ENCODE measurements at regions of chr6 and their contacts with region 1.

Region 1: DNA sequence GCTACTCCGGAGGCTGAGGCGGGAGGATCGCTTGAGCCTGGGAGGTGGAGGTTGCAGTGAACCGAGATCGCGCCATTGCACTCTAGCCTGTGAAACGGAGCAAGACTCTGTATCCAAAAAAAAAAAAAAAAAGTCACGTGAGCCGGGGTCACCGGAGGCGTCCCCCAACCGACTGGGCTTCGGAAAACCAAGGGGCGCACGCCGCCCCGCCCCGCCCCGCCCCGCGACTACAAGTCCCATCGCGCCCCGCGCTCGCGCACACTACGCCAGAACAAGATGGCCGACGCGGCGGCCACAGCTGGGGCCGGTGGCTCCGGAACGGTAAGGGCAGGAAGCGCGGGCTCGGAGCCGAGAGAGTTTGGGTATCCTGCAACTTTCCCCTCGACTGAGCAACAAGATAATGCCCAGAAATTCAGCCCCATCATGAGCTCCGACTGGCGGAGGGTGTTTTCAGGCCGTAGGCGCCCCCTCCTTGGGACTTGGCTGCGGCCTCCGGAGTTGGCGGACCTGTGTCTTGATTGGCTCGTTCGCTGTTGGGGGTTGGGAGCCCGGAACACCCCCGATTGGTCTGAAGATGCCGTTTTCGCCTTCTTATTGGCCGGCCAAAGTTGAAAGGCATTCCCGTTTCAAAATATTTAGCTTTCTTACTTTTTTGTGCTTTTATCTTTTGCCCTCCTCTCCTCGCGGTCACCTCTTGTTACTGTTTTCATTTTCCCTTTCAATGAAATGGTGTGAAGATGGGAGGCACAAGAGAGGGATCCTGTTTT is at the start of gene TAF8:
- DNase-seq: peak; percentile 77
- ATAC-seq: peak; percentile 89
- H3K4me3 ChIP-seq: peak within 1 kb of the TSS; percentile 95
- H3K27ac ChIP-seq: peak within 1 kb of the TSS; percentile 97
- H3K4me1 ChIP-seq: peaks cover 28% of the 10 kb centered on the region
- H3K27me3 ChIP-seq: no peaks in the 10 kb centered on the region
- CTCF ChIP-seq: no peak
- EP300 ChIP-seq: no peak
- POLR2A ChIP-seq: peak; percentile 99
- RAD21 ChIP-seq: no peak
- polyA plus RNA-seq, gene TAF8: 17.5 to 25.5 TPM

Region 2: GRCh38 chr6:41941280-41942066 is 109.0 kb before region 1 on chr6 and contains the start of gene CCND3:
- CTCF ChIA-PET with region 1: interaction called, 193 read pairs
- POLR2A ChIA-PET with region 1: interaction called, 8 read pairs
- RAD21 ChIA-PET with region 1: interaction called, 24 read pairs
- SMC1A ChIA-PET with region 1: interaction called, 138 read pairs
- in situ Hi-C with region 1: loop called (anchors 10 kb)
- intact Hi-C with region 1: no loop called
- DNase-seq: peak; percentile 44
- ATAC-seq: peak; percentile 94
- H3K4me3 ChIP-seq: peak within 1 kb of the TSS; percentile 98
- H3K27ac ChIP-seq: peak within 1 kb of the TSS; percentile 61
- H3K4me1 ChIP-seq: peaks cover 29% of the 10 kb centered on the region
- H3K27me3 ChIP-seq: no peaks in the 10 kb centered on the region
- CTCF ChIP-seq: no peak
- EP300 ChIP-seq: no peak
- POLR2A ChIP-seq: peak; percentile 27; the same call in 1 of the 2 replicates
- RAD21 ChIP-seq: no peak
- polyA plus RNA-seq, gene CCND3: 6.0 to 16.3 TPM

Region 3: GRCh38 chr6:42066156-42066555 is 15.7 kb after region 1 on chr6:
- CTCF ChIA-PET with region 1: no interaction called
- POLR2A ChIA-PET with region 1: interaction called, 10 read pairs
- RAD21 ChIA-PET with region 1: no interaction called
- SMC1A ChIA-PET with region 1: interaction called, 5 read pairs
- in situ Hi-C with region 1: no loop called
- intact Hi-C with region 1: no loop called
- DNase-seq: no peak
- ATAC-seq: no peak
- H3K4me3 ChIP-seq: no peak overlapping the region
- H3K27ac ChIP-seq: no peak overlapping the region
- H3K4me1 ChIP-seq: no peaks in the 10 kb centered on the region
- H3K27me3 ChIP-seq: no peaks in the 10 kb centered on the region
- CTCF ChIP-seq: no peak
- EP300 ChIP-seq: no peak
- POLR2A ChIP-seq: no peak
- RAD21 ChIP-seq: no peak

Region 4: DNA sequence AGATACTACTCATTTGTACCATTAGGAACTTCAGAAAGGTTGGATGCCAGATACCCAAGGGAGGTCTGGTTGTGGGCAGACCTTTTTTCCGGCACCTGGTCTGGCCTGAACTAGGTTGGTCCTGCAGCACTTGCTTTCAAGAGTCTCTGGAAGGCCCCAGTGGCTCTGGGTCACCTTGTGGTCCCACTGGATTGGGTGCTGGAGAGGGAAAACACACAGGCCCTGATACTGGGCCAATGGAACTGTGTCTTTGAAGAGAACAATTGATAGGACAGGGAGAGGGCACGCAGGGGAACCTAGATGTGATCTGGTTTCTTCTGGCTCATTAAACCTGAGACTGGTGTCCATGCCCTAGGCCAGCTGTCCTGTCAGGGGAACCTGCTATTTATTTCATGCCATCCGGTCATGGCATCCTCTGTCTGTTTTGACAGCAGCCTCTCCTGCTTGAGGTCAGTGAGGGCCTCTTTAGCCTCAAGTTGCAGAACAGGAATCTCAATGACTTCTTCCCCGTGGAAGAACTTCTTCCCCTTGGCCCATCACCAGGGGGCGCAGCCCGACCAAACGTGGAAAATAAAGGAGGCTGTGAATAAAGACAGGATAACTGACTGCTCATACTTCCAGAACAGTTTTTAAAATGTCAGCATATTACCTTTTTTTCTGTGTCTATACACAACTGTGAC is 24.9 kb after region 1 on chr6:
- CTCF ChIA-PET with region 1: interaction called, 11 read pairs
- POLR2A ChIA-PET with region 1: no interaction called
- RAD21 ChIA-PET with region 1: no interaction called
- SMC1A ChIA-PET with region 1: interaction called, 3 read pairs
- in situ Hi-C with region 1: no loop called
- intact Hi-C with region 1: no loop called
- DNase-seq: no peak
- ATAC-seq: peak; percentile 68
- H3K4me3 ChIP-seq: no peak overlapping the region
- H3K27ac ChIP-seq: no peak overlapping the region
- H3K4me1 ChIP-seq: no peaks in the 10 kb centered on the region
- H3K27me3 ChIP-seq: no peaks in the 10 kb centered on the region
- CTCF ChIP-seq: peak; percentile 72 to 85 (median 81)
- EP300 ChIP-seq: no peak
- POLR2A ChIP-seq: no peak
- RAD21 ChIP-seq: peak; percentile 81